Thyroid gland (tissue), 4 donors: ENCODE measurements at regions of chr1 and their contacts with region 1.

Region 1: DNA sequence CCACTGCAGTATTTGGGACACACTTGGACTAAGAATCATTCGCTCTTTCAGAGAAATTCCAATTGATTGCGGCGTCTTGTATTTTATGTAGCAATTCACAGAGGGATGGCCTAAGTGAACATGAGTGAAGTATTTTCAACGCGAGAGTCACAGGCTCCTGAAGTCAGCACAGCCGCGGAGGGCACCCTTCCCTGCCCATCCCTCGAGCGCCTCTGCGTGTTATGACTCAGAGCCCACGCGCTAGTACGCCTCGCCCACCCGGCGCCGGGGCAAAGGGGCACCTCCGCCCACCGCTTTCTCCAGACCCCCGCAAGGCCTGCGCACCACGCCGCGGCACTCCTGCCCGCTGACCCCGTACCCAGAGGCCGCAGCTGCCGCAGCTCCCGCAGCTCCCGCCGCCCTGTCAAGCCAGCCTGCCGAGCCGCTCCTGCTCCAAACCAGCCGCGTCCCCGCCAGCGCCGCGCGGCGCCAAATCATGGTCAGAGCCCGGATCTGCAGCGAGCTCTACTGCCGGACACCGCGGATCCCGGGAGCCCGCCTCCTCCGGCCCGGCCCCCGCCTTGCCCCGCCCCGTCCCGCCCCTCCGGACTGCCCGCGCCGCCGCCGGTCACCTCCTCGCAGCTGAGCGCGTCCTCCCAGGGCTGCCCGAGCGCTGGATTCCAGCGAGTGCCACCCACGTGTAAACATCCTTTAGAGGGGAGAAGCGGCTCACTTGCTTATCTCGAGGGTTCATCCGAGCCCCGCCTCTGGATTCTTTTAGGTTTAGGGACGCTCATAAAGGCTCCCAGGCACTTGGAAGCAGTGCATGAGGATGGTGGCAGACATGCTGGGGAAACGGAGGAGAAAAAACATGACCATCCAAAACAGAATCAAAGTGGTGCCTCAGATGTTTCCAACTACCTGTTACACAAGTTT is at the start of gene GLRX2:
- DNase-seq: peak; percentile 82 to 87
- H3K4me3 ChIP-seq: peak within 1 kb of the TSS; percentile 25 to 82 (median 75)
- H3K27ac ChIP-seq: peak within 1 kb of the TSS; percentile 78 to 87 (median 82)
- H3K4me1 ChIP-seq: peaks cover 9 to 11% of the 10 kb centered on the region in 2 donors
- H3K27me3 ChIP-seq: no peaks in the 10 kb centered on the region
- CTCF ChIP-seq: peak in 1 of 6 experiments; percentile 8
- POLR2A ChIP-seq: peak; percentile 45 to 85
- total RNA-seq, gene GLRX2: 4.5 to 23.0 (median 6.1) TPM

Region 2: GRCh38 chr1:193069748-193070385 is 35.3 kb before region 1 on chr1:
- intact Hi-C with region 1: loop called (anchors 5 kb)
- DNase-seq: no peak
- H3K4me3 ChIP-seq: no peak overlapping the region
- H3K27ac ChIP-seq: no peak overlapping the region
- H3K4me1 ChIP-seq: peaks cover 3 to 9% of the 10 kb centered on the region in 2 donors
- H3K27me3 ChIP-seq: no peaks in the 10 kb centered on the region
- CTCF ChIP-seq: no peak
- POLR2A ChIP-seq: no peak